ENCODE measurements at regions of chr11 and their contacts with region 1.

Region 1: DNA sequence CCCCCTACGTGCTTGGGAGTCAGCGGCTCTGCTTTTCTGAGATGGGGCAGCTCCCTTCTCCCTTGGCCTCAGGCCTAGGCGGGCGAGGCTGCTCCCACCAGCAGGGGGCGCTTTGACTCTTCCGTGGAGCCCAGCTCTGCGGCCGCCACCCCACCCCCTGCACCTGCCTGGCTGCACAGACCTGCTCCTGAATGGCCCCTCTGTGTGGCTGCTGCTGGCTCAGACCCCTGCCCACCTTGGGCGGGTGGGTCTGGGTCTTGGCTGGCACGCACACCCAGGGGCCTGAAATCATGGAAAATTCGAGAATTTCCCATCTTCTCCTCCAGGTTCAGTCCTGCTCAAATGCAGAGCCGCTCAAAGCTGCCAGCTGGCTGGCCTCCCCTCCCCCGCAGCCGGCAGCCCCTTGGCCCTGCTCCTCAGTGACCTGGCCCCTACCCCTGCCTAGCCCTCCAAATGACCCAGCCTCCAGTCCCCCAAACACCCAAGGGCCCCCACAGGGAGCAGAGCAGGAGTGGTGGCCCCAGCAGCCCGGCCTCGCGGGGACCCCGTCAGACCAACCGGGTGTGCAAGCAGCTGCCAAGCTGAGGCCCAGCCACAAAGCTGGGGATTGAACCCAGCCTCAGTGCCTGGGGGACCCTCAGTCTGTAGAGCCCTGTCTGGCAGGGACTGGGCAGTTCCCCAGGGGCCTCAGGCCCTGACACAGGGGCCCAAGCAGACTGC is 9.0 kb downstream of the PRR33 start:
- DNase-seq: peak; percentile 59 to 83 (median 75)
- H3K4me3 ChIP-seq: no peak overlapping the region
- H3K4me3 Mint-ChIP-seq: no peak overlapping the region
- H3K27ac ChIP-seq: no peak overlapping the region
- H3K27ac Mint-ChIP-seq: peak overlapping the region in 1 of 8 donors; percentile 38
- H3K4me1 ChIP-seq: peaks cover 8% of the 10 kb centered on the region
- H3K4me1 Mint-ChIP-seq: peaks cover 3 to 33% (median 13%) of the 10 kb centered on the region in 3 donors
- H3K27me3 ChIP-seq: no peaks in the 10 kb centered on the region
- H3K27me3 Mint-ChIP-seq: no peaks in the 10 kb centered on the region

Region 2: DNA sequence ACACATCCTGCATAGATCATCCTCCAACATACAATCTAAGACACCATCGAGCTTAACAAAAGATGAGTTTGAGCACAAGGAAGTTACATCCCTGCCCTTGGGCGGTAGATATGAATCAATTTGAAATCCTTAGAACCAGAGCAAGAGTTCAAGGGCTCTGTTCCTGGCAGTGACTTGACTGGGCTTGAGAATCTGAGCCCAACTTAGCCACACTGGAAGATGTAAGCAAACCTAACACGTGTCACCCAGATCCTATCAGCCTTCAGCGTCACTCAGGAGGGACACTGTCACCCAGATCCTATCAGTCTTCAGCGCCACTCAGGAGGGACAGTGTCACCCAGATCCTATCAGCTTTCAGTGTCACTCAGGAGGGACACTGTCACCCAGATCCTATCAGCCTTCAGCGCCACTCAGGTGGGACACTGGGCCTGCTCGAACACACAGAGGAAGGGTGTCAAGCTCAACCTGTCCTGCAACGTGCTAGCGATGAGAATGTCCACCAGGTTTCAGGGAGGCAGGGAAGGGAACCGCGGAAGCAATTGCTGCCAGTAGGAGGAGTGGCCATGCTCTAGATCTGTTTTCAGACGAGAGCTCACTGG is 86.2 kb before region 1 on chr11:
- CTCF ChIA-PET with region 1: no interaction called
- POLR2A ChIA-PET with region 1: no interaction called
- DNase-seq: no peak
- H3K4me3 ChIP-seq: no peak overlapping the region
- H3K4me3 Mint-ChIP-seq: no peak overlapping the region
- H3K27ac ChIP-seq: no peak overlapping the region
- H3K27ac Mint-ChIP-seq: no peak overlapping the region
- H3K4me1 ChIP-seq: no peaks in the 10 kb centered on the region
- H3K4me1 Mint-ChIP-seq: peaks cover 8 to 11% (median 8%) of the 10 kb centered on the region in 3 donors
- H3K27me3 ChIP-seq: no peaks in the 10 kb centered on the region
- H3K27me3 Mint-ChIP-seq: peaks cover 12 to 51% of the 10 kb centered on the region in 2 donors

Region 3: DNA sequence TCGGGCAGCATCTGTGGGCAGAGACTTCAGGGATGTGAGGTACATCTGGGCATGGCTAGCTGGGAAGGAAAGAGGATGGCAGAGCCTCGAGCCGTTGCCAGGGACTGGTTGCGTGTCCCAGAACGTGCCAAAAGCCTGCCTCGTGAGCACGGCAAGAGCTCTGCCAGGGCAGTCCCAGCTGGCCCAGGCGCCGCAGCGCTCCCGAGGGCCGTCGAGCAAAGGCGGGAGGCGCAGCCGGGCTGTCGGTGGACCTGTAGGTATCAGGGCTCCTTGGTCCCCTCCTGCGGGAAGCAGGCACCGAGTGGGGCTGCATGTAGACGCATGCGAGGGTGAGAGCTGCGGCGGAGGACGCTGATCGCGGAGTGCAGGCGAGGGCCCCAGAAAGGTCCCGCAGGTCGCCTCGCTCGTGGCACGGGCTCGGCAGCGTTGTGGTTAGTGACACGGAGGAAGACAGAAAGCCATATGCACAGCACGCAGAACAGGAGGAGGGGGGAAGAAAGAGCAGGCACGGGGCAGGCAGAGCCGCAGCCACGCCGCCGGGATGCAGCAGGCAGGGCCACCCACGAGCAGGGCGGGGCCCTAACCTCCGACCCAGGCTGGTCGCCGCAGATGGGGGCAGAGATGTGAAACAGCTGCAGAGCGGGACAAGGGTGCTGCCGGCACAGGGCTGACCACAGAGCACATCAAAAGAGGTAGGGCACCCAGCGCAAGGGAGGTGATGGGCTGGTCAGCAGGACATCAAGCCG is 11.8 kb before region 1 on chr11:
- CTCF ChIA-PET with region 1: interaction called, 13 read pairs
- POLR2A ChIA-PET with region 1: no interaction called
- DNase-seq: peak; percentile 35 to 72 (median 59)
- H3K4me3 ChIP-seq: peak overlapping the region; percentile 26
- H3K4me3 Mint-ChIP-seq: peak overlapping the region; percentile 37 to 90 (median 79)
- H3K27ac ChIP-seq: peak overlapping the region; percentile 4
- H3K27ac Mint-ChIP-seq: peak overlapping the region; percentile 68 to 98 (median 88)
- H3K4me1 ChIP-seq: peaks cover 40% of the 10 kb centered on the region
- H3K4me1 Mint-ChIP-seq: peaks cover 42 to 80% (median 57%) of the 10 kb centered on the region in 3 donors
- H3K27me3 ChIP-seq: no peaks in the 10 kb centered on the region
- H3K27me3 Mint-ChIP-seq: no peaks in the 10 kb centered on the region

Measured in CD8-positive, alpha-beta memory T cell (primary cell).